Lower leg skin (tissue), 4 donors: ENCODE measurements at regions of chr15 and their contacts with region 1.

Region 1: GRCh38 chr15:68383161-68384074 is 48.5 kb downstream of the ITGA11 start:
- DNase-seq: peak; percentile 26 to 29
- H3K4me3 ChIP-seq: no peak overlapping the region
- CTCF ChIP-seq: peak in 1 of 3 donors; percentile 66
- POLR2A ChIP-seq: no peak

Region 2: DNA sequence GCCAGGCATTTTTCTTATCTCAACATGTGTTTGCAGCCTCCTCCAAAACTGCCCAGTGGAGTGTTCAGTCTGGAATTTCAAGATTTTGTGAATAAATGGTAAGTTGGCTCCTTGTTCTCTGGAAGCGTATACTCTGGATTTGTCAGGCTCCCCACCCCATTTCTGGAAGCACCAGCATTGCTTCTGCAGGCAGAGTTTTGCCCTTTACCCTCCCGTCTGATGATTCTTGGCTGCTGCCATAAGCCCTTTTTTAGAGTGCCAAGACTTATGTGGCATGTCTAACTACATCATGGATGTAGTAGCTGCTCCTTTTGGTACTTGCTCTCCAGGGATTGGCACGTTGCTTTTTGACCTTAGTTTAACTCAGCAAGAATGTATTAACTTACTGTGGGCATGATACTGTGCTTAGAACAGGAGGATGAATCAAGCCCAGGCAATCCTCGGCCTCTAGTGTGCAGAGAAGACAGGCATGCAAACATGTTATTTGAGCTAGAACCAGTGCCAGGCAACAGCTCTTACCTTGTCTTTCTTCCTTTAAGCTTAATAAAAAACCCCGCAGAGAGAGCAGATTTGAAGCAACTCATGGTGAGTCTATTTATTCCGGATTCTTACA is 1894.1 kb before region 1 on chr15:
- intact Hi-C with region 1: no loop called
- DNase-seq: peak in 1 of 2 donors; percentile 76
- H3K4me3 ChIP-seq: no peak overlapping the region
- CTCF ChIP-seq: no peak
- POLR2A ChIP-seq: no peak

Region 3: DNA sequence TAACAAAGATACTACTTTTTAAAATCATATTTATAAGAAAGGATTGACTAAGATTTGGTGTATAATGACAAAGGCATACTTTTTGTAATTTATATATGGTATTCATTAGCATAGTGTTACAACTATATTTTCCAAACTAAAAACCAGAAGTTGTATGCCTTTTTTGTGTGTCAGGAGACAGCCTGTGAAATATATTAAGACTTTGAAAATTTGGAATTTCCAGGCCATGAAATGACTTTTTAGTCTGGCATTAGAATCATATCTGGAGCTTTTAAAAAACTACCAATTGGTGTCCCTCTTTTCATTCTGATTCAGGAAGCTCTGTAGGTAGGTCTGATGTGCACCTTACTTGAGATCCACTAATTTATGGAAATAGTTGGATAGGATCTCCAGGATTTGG is 220.2 kb before region 1 on chr15:
- intact Hi-C with region 1: no loop called
- DNase-seq: no peak
- H3K4me3 ChIP-seq: no peak overlapping the region
- CTCF ChIP-seq: no peak
- POLR2A ChIP-seq: no peak

Region 4: DNA sequence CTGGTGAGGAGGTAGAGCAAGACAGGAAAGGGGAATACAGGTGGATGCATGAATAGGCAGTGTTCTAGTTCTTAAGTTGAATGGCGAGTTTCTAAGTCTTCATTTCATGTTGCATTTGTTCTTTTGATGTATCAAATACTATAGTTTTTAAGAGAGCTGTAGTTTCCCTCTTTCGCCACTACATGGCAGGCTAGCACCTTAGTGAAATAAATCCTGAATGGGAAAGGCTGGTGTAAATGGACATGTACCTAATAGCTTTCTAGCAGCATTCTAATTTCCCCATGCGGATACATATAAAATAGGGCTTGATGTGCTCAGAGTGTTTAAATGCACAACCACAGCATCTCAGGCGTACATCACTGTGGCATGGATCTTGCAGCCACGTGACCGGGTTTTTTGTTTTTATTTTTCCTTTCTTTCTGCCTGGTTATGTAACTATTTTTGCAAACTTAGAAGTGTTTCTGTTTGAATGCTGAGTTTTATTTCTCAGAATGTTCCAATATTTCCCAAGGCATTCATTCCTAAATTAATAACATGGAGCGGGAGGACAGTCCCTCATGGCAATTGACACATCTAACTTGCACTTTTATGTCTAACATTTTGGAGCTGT is 130.4 kb before region 1 on chr15:
- intact Hi-C with region 1: loop called (anchors 10 kb)
- DNase-seq: no peak
- H3K4me3 ChIP-seq: no peak overlapping the region
- CTCF ChIP-seq: peak in 2 of 3 donors; percentile 19 to 69
- POLR2A ChIP-seq: no peak

Region 5: GRCh38 chr15:68304589-68305337 is 78.7 kb before region 1 on chr15:
- intact Hi-C with region 1: loop called (anchors 5 kb)
- DNase-seq: peak in 1 of 2 donors; percentile 80
- H3K4me3 ChIP-seq: no peak overlapping the region
- CTCF ChIP-seq: no peak
- POLR2A ChIP-seq: no peak

Region 6: DNA sequence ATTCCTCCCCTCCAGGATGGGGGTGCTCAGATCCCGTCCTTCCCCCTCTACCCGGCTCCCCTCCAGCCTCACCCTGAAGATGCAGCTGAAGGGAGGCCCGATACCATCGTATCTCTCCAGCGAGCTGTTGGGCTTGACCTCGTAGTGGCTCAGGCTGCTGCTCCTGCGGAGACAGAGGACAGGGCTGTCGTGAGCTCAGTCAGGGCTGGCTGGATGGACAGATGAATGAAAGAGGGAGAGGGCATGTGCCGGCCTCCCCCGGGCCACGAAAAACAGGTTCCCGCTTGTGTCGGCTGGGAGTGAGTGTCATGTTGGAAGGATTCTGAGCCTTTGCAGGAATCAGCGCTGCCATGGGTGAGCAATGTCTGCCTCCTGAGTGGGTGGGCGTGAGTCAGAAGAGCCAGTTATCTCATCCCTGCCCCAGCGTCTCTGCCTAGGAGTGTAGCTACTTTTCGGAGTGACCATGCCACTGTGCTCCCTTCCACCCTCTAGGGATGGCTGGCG is 70.7 kb before region 1 on chr15:
- intact Hi-C with region 1: loop called (anchors 5 kb)
- DNase-seq: peak in 1 of 2 donors; percentile 63
- H3K4me3 ChIP-seq: no peak overlapping the region
- CTCF ChIP-seq: no peak
- POLR2A ChIP-seq: no peak

Region 7: DNA sequence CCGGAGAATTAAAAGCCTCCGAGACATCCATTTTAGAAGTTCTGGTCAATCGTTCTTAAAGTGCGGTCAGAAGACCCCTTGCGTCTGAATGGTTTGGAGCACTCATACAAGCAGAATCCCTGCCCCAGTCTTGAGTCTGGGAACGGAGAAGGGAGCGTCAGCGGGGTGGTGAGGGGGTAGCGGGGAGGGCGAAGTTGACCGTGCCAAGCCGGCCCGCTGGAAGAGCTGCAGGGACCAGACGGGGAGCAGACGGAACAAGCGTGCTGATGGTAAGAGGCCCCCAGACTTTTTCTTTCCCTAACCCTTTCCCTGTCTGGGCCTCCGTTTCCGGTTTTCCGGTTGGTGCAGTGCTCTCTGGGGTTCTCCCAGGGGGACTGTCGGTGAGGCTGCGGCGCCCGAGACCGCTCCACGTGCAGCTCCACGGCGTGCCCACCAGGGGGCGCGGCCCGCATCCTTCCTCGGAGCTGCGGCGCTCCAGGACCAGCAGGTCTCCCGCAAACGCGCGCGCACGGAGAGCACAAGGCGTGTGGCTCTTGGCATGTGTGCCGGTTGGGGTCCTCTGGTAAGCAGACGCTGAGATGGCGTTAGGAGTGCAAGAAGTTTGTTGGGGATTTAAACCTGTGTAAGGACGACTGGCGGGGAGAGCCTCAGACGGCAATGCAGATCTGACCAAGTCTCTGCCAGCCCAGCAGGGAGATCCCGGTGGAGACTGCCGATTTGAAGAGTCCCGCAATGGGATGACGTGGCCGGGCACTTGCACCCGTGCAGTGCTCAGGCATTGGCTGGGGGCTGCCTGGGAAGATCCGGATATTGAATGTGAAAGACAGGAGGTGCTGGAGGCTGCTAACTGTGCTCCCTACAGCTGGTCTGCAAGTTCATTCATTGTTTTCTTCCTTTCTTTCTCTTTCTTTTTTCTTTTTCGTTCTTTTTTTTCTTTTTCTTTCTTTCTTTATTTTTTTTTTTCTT is 176.2 kb after region 1 on chr15:
- intact Hi-C with region 1: no loop called
- DNase-seq: peak; percentile 63 to 94
- H3K4me3 ChIP-seq: no peak overlapping the region
- CTCF ChIP-seq: peak in 1 of 3 donors; percentile 94
- POLR2A ChIP-seq: no peak

Region 8: GRCh38 chr15:69760890-69761568 is 1377.6 kb after region 1 on chr15:
- intact Hi-C with region 1: no loop called
- DNase-seq: peak; percentile 79 to 88
- H3K4me3 ChIP-seq: no peak overlapping the region
- CTCF ChIP-seq: no peak
- POLR2A ChIP-seq: no peak